Heart right ventricle (tissue), 16 donors: ENCODE measurements at regions of chr20 and their contacts with region 1.

Region 1: GRCh38 chr20:54657268-54657827 is 182.0 kb downstream of the DOK5 start:
- DNase-seq: no peak
- ATAC-seq: no peak
- H3K4me3 ChIP-seq: no peak overlapping the region
- H3K27ac ChIP-seq: no peak overlapping the region
- H3K4me1 ChIP-seq: no peaks in the 10 kb centered on the region
- H3K27me3 ChIP-seq: peaks cover 0 to 6% (median 0%) of the 10 kb centered on the region in 7 donors
- CTCF ChIP-seq: no peak

Region 2: GRCh38 chr20:54295686-54296085 is 361.7 kb before region 1 on chr20:
- intact Hi-C with region 1: loop called in 1 of 10 experiments (anchors 5 kb)
- DNase-seq: no peak
- ATAC-seq: no peak
- H3K4me3 ChIP-seq: no peak overlapping the region
- H3K27ac ChIP-seq: no peak overlapping the region
- H3K4me1 ChIP-seq: peaks cover 0 to 13% (median 0%) of the 10 kb centered on the region in 9 donors
- H3K27me3 ChIP-seq: peaks cover 0 to 4% (median 0%) of the 10 kb centered on the region in 7 donors
- CTCF ChIP-seq: no peak

Region 3: DNA sequence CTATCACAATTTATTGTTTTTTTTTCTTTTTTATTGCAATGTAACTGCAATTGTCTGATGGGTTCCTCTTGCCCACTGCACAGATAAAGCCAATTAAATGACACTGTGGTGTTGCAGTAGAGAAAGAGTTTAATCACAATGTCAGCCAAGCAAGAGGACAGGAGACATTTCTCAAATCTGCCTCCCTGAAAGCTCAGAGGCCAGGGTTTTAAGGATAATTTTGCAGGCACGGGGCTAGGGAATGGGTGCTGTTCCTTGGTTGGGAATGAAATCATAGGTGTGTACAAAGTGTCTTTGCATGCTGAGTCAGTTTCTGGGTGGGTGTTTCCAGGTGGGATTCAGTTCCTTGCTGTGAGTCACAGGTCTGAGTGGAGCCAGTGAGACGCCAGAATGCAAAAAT is 89.4 kb after region 1 on chr20:
- intact Hi-C with region 1: no loop called
- DNase-seq: no peak
- ATAC-seq: no peak
- H3K4me3 ChIP-seq: no peak overlapping the region
- H3K27ac ChIP-seq: no peak overlapping the region
- H3K4me1 ChIP-seq: no peaks in the 10 kb centered on the region
- H3K27me3 ChIP-seq: no peaks in the 10 kb centered on the region
- CTCF ChIP-seq: no peak